CD4-positive, alpha-beta T cell (primary cell): ENCODE measurements at regions of chr19 and their contacts with region 1.

Region 1: GRCh38 chr19:37251308-37252229 is 33.6 kb downstream of the ZNF383 start:
- DNase-seq: peak in 8 of 14 experiments; percentile 2 to 73 (median 7)
- ATAC-seq: peak; percentile 24
- H3K4me3 ChIP-seq: peak overlapping the region; percentile 28
- H3K4me3 Mint-ChIP-seq: no peak overlapping the region
- H3K27ac ChIP-seq: no peak overlapping the region
- H3K27ac Mint-ChIP-seq: no peak overlapping the region
- H3K4me1 ChIP-seq: peaks cover 7% of the 10 kb centered on the region
- H3K4me1 Mint-ChIP-seq: no peaks in the 10 kb centered on the region
- H3K27me3 ChIP-seq: no peaks in the 10 kb centered on the region
- H3K27me3 Mint-ChIP-seq: no peaks in the 10 kb centered on the region
- CTCF ChIP-seq: no peak

Region 2: GRCh38 chr19:36950335-36951119 is 301.0 kb before region 1 on chr19:
- CTCF ChIA-PET with region 1: no interaction called
- POLR2A ChIA-PET with region 1: no interaction called
- intact Hi-C with region 1: loop called in 1 of 2 experiments (anchors 10 kb)
- DNase-seq: no peak
- ATAC-seq: no peak
- H3K4me3 ChIP-seq: no peak overlapping the region
- H3K4me3 Mint-ChIP-seq: no peak overlapping the region
- H3K27ac ChIP-seq: no peak overlapping the region
- H3K27ac Mint-ChIP-seq: no peak overlapping the region
- H3K4me1 ChIP-seq: no peaks in the 10 kb centered on the region
- H3K4me1 Mint-ChIP-seq: no peaks in the 10 kb centered on the region
- H3K27me3 ChIP-seq: no peaks in the 10 kb centered on the region
- H3K27me3 Mint-ChIP-seq: no peaks in the 10 kb centered on the region
- CTCF ChIP-seq: no peak